Activated CD4-positive, alpha-beta memory T cell treated with anti-CD3 and anti-CD28 coated beads for 36 hours (primary cell): ENCODE measurements at regions of chr6 and their contacts with region 1.

Region 1: GRCh38 chr6:152642989-152643388 is 5.8 kb upstream of the SYNE1 start:
- DNase-seq: peak; percentile 48
- H3K4me3 Mint-ChIP-seq: no peak overlapping the region
- H3K27ac Mint-ChIP-seq: no peak overlapping the region
- H3K4me1 Mint-ChIP-seq: no peaks in the 10 kb centered on the region
- H3K27me3 Mint-ChIP-seq: peaks cover 9% of the 10 kb centered on the region

Region 2: GRCh38 chr6:152250127-152250526 is 392.9 kb before region 1 on chr6:
- CTCF ChIA-PET with region 1: no interaction called
- POLR2A ChIA-PET with region 1: no interaction called
- intact Hi-C with region 1: no loop called
- DNase-seq: no peak
- H3K4me3 Mint-ChIP-seq: no peak overlapping the region
- H3K27ac Mint-ChIP-seq: no peak overlapping the region
- H3K4me1 Mint-ChIP-seq: no peaks in the 10 kb centered on the region
- H3K27me3 Mint-ChIP-seq: no peaks in the 10 kb centered on the region

Region 3: DNA sequence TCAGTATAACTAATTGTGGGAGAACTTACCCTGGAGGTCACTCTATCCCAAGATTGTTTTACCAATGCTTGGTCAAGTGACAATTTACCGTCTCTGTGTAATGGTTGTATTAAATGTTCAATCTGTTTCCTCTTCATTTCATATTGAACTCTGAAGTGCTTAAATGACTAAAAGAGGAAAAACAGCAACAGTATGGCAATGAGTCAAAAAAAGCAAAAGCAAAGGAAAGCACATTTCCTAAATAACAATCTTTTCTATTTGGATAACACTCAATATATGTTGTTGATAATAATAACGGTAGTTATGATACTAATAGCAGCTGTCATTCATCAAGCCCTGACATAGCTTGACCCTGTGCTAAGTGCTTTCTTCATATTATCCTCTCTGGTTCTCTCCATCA is 158.2 kb before region 1 on chr6:
- CTCF ChIA-PET with region 1: interaction called, 6 read pairs
- POLR2A ChIA-PET with region 1: no interaction called
- intact Hi-C with region 1: loop called (anchors 10 kb)
- DNase-seq: no peak
- H3K4me3 Mint-ChIP-seq: no peak overlapping the region
- H3K27ac Mint-ChIP-seq: no peak overlapping the region
- H3K4me1 Mint-ChIP-seq: no peaks in the 10 kb centered on the region
- H3K27me3 Mint-ChIP-seq: no peaks in the 10 kb centered on the region